GM12878 (cell line): ENCODE measurements at regions of chr20 and their contacts with region 1.

Region 1: DNA sequence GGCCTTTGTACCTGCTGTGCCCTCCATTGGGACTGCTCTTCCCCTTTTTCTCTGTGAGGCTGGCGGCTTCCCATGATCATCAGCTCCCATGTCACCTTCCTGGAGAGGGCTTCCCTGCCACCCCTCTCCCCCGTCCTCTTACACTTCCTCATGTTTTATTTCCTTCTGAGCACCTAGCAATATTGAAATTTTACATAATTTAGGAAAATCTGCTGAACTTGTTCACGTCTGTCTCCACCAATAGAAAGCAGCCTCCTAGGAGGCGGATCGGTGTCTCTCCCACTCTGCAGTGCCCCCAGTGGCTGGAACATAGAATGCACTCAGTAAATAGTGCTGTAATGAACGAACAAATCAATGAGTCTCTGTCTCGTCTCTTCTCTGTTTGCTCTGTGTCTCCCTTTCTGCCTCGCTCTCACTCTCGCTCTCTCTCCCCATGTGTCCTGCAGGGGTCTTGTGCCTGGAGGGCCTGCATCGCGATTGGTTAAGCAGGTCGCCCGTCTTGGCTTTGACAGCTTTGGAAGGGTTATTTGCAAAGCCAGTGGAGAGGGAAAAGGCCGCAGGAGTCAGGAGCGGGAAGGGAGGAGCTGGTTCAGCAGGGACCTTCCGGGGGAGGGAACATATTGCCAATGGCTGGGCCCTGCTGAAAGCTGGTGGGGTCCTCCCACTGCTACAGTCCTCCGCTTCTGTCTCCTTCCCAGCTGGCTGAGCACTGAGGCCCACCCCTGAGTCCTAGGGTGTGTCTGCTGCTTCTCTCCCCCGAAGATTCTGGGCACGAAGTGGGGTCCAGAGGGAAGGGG is 12.1 kb upstream of the OCSTAMP start:
- DNase-seq: no peak
- ATAC-seq: peak; percentile 94
- H3K4me3 ChIP-seq: no peak overlapping the region; the same call in 1 of the 2 replicates
- H3K27ac ChIP-seq: no peak overlapping the region
- H3K4me1 ChIP-seq: no peaks in the 10 kb centered on the region
- H3K27me3 ChIP-seq: no peaks in the 10 kb centered on the region
- CTCF ChIP-seq: peak; percentile 74 to 91 (median 79)
- EP300 ChIP-seq: no peak
- POLR2A ChIP-seq: no peak
- RAD21 ChIP-seq: peak; percentile 63

Region 2: GRCh38 chr20:46545077-46545826 is 17.3 kb before region 1 on chr20:
- CTCF ChIA-PET with region 1: interaction called, 43 read pairs
- POLR2A ChIA-PET with region 1: no interaction called
- RAD21 ChIA-PET with region 1: interaction called, 7 read pairs
- SMC1A ChIA-PET with region 1: interaction called, 8 read pairs
- in situ Hi-C with region 1: no loop called
- intact Hi-C with region 1: no loop called
- DNase-seq: no peak
- ATAC-seq: peak; percentile 77
- H3K4me3 ChIP-seq: no peak overlapping the region
- H3K27ac ChIP-seq: peak overlapping the region; percentile 53; the same call in 1 of the 2 replicates
- H3K4me1 ChIP-seq: peaks cover 32% of the 10 kb centered on the region
- H3K27me3 ChIP-seq: no peaks in the 10 kb centered on the region
- CTCF ChIP-seq: no peak
- EP300 ChIP-seq: no peak
- POLR2A ChIP-seq: no peak
- RAD21 ChIP-seq: no peak

Region 3: GRCh38 chr20:46573788-46574584 is 11.4 kb after region 1 on chr20:
- CTCF ChIA-PET with region 1: interaction called, 12 read pairs
- POLR2A ChIA-PET with region 1: interaction called, 3 read pairs
- RAD21 ChIA-PET with region 1: no interaction called
- SMC1A ChIA-PET with region 1: interaction called, 10 read pairs
- in situ Hi-C with region 1: no loop called
- intact Hi-C with region 1: no loop called
- DNase-seq: no peak
- ATAC-seq: no peak
- H3K4me3 ChIP-seq: no peak overlapping the region
- H3K27ac ChIP-seq: no peak overlapping the region
- H3K4me1 ChIP-seq: no peaks in the 10 kb centered on the region
- H3K27me3 ChIP-seq: no peaks in the 10 kb centered on the region
- CTCF ChIP-seq: no peak
- EP300 ChIP-seq: no peak
- POLR2A ChIP-seq: no peak
- RAD21 ChIP-seq: no peak

Region 4: DNA sequence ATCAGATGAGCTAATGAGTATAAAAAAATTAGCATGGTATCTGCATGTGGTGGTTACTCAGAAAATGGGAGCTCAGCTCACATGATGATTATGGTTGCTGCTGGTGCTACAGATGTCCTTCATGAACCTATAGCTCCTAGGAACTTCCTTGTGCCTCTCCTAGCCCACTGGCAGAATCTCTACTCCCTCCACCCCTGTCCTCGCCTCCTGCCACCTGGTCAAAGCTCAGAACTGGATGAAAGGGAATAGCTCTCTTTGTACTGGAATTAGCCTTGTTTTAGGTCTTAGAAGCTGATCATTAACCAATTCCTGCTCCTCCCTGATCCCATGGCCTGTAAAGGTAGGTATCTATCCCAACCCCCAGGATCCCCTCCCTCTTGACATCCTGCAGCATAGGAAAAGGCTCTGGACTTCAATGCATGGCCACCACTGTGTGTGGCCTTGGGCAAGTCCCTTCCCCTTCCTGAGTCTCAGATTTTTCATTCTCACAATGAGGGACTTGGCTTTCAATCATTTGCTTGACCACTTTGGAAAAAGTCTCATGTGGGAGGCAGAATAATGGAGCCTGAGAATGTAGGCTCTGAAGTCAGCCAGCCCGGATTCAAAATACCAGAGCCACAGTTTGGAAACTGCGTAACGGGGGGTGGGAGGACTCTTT is 44.7 kb after region 1 on chr20:
- CTCF ChIA-PET with region 1: no interaction called
- POLR2A ChIA-PET with region 1: no interaction called
- RAD21 ChIA-PET with region 1: no interaction called
- SMC1A ChIA-PET with region 1: no interaction called
- in situ Hi-C with region 1: no loop called
- intact Hi-C with region 1: no loop called
- DNase-seq: no peak
- ATAC-seq: no peak
- H3K4me3 ChIP-seq: no peak overlapping the region
- H3K27ac ChIP-seq: no peak overlapping the region
- H3K4me1 ChIP-seq: no peaks in the 10 kb centered on the region
- H3K27me3 ChIP-seq: no peaks in the 10 kb centered on the region
- CTCF ChIP-seq: no peak
- EP300 ChIP-seq: no peak
- POLR2A ChIP-seq: no peak
- RAD21 ChIP-seq: no peak

Region 5: DNA sequence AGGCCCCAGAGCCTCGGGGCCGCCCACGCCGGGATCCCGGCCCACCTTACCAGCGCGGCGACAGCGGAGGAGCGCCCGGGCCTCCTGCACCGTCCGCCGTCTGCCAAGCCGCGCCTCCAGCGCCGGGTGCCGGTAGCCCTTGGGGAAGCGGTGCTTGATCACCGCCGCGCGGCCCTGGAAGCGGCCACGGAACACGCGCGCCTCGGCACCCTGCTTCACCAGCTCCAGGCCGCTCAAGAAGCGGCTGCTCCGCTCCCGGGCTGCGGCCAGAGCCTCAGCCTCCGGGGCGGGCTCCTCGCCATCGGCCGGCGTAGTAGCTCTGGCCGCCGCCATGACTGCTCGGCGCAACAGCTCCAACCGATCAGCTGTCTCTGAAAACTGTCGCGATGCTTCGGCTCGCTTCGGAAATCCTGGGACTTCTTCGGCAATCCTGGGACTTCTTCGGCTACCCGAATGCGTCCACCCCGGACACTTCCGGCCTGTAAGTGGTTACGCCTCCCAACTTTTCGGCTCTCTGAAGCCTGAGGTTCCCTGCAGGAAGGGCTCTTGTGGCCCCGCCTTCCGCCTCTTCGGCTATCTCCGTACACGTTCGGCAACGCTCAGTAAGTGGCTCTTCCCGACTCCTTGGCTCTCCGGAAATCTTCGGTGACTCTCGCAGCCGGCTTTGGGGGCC is 126.6 kb after region 1 on chr20 and contains the start of gene TP53RK:
- CTCF ChIA-PET with region 1: interaction called, 4 read pairs
- POLR2A ChIA-PET with region 1: no interaction called
- RAD21 ChIA-PET with region 1: no interaction called
- SMC1A ChIA-PET with region 1: interaction called, 3 read pairs
- in situ Hi-C with region 1: loop called (anchors 10 kb)
- intact Hi-C with region 1: no loop called
- DNase-seq: peak; percentile 97
- ATAC-seq: peak; percentile 97
- H3K4me3 ChIP-seq: peak within 1 kb of the TSS; percentile 78
- H3K27ac ChIP-seq: peak within 1 kb of the TSS; percentile 76
- H3K4me1 ChIP-seq: peaks cover 3% of the 10 kb centered on the region
- H3K27me3 ChIP-seq: no peaks in the 10 kb centered on the region
- CTCF ChIP-seq: peak in 1 of 3 experiments; percentile 26; a peak in 1 of 6 replicates
- EP300 ChIP-seq: no peak
- POLR2A ChIP-seq: peak; percentile 87
- RAD21 ChIP-seq: no peak
- polyA plus RNA-seq, gene TP53RK: 3.8 to 6.2 TPM

Region 6: DNA sequence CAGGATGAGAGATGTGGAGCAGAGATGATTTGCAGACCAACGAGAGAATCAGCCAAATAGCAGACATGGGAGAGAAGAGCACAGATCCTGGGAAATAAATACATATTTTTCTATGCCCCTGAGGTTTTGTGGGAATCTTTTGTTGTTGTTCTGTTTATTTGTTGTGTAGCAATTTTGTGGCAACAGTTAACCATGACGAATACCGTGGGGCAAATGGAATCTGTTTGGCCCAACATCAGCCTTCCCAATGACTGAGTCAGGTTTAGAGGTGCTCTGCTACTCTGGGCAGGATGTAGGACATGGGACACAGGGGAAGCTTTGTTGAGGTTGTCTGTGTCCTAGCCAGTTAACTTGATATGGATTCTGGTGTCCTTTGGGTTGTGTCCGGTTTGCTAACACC is 139.0 kb after region 1 on chr20:
- CTCF ChIA-PET with region 1: no interaction called
- POLR2A ChIA-PET with region 1: no interaction called
- RAD21 ChIA-PET with region 1: no interaction called
- SMC1A ChIA-PET with region 1: no interaction called
- in situ Hi-C with region 1: no loop called
- intact Hi-C with region 1: no loop called
- DNase-seq: no peak
- ATAC-seq: no peak
- H3K4me3 ChIP-seq: no peak overlapping the region
- H3K27ac ChIP-seq: no peak overlapping the region
- H3K4me1 ChIP-seq: no peaks in the 10 kb centered on the region; the same call in 1 of the 2 replicates
- H3K27me3 ChIP-seq: no peaks in the 10 kb centered on the region; a peak in 1 of 4 replicates
- CTCF ChIP-seq: no peak
- EP300 ChIP-seq: no peak
- POLR2A ChIP-seq: no peak
- RAD21 ChIP-seq: no peak